WTC11 (cell line): ENCODE measurements at regions of chr2 and their contacts with region 1.

Region 1: DNA sequence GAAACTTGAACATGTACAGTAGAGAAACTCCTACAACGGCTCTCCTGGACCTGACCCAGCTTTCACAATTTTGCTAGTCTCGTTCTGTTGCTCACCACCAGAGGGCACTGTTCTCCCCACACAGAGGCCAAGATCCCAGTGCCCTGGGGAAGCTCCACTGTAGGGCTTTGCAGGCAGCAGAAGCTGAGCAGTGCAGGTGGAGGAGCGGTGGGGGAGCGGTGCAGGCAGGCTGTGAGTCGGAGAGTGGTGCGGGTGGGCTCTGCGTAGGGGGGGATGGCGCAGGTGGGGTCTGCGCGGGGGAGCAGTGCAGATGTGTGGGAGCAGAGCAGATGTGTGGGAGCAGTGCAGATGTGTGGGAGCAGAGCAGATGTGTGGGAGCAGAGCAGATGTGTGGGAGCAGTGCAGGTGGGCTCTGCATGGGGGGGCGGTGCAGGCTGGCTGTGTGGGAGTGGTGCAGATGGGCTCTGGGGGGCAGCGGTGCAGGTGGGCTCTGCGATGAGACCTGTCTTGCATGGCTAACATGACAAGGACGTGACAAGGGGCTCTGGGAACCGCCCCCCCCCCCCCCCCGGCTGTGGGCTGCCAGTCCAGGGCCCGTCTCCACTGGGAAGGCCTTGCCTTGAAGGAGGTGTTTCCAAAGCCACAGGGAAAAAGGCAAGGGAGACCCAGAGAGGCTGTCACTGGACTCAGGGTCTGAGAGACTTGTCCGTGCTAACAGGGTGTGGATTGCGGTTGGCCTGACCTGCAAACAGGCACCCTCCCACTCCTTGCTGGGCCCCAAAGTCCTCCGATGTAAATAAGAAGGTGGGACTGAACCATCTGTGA is 7.3 kb downstream of the CYS1 start:
- DNase-seq: peak; percentile 83
- ATAC-seq: peak; percentile 97
- H3K4me3 Mint-ChIP-seq: no peak overlapping the region
- H3K27ac Mint-ChIP-seq: no peak overlapping the region
- H3K4me1 Mint-ChIP-seq: peaks cover 18% of the 10 kb centered on the region
- H3K27me3 Mint-ChIP-seq: peaks cover 14% of the 10 kb centered on the region
- CTCF ChIP-seq: peak; percentile 89

Region 2: DNA sequence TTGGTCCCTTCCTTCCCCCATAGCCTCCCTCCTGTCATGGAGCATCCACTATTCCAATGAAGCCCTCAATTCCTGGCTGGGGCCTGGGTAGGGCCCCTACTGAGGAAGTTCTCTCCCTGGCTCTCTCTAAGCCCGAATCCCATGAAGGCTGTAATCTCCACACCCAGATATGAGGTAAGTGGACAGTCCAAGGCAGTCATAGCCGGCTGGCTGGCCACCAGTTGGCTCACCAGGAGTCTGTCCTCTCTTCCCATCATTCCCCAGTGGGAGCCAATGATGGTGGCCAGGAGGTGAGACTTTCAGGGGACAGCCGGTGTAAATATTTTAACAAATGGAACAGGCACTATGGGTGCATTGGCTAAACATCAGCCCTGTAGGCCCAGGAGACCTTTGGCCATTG is 236.3 kb before region 1 on chr2:
- CTCF ChIA-PET with region 1: no interaction called
- POLR2A ChIA-PET with region 1: no interaction called
- DNase-seq: no peak
- ATAC-seq: no peak
- H3K4me3 Mint-ChIP-seq: no peak overlapping the region
- H3K27ac Mint-ChIP-seq: no peak overlapping the region
- H3K4me1 Mint-ChIP-seq: peaks cover 6% of the 10 kb centered on the region
- H3K27me3 Mint-ChIP-seq: no peaks in the 10 kb centered on the region
- CTCF ChIP-seq: no peak

Region 3: DNA sequence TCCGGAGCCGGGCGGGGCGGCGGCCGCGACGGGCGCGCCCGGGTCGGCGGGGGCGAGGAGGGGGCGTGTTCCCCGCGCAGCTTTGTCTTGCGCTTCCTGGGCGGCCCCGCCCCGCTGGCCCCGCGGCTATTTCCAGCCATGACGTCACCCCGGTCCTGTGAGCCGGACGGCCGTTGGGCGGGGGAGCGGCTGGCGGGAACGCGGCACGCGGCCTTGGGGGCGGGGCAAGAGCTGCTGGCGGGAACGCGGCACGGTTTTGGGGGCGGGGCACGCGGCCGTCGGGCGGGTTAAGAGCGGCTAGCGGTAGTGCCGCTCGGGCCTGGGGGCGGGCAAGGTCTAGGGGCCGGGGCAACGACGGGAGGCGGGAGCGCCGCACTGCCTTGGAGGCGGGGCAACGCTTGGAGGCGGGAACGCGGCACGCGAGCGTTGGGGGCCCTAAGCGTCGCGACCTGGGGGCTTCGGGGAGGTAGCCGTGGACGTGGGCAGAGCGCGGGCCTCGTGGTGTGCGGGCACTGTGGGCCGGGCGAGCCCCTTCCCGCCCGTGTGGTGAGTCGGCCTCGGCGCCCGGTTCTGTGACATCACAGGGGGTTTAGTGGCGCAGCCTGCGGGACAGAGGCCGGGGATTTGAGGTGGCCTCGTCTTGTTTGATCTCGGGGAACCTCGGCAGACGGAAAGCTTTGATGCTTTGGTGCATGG is 28.8 kb before region 1 on chr2:
- CTCF ChIA-PET with region 1: interaction called, 14 read pairs
- POLR2A ChIA-PET with region 1: no interaction called
- DNase-seq: peak; percentile 95
- ATAC-seq: peak; percentile 63
- H3K4me3 Mint-ChIP-seq: peak overlapping the region; percentile 49
- H3K27ac Mint-ChIP-seq: no peak overlapping the region
- H3K4me1 Mint-ChIP-seq: peaks cover 10% of the 10 kb centered on the region
- H3K27me3 Mint-ChIP-seq: peaks cover 38% of the 10 kb centered on the region
- CTCF ChIP-seq: no peak

Region 4: DNA sequence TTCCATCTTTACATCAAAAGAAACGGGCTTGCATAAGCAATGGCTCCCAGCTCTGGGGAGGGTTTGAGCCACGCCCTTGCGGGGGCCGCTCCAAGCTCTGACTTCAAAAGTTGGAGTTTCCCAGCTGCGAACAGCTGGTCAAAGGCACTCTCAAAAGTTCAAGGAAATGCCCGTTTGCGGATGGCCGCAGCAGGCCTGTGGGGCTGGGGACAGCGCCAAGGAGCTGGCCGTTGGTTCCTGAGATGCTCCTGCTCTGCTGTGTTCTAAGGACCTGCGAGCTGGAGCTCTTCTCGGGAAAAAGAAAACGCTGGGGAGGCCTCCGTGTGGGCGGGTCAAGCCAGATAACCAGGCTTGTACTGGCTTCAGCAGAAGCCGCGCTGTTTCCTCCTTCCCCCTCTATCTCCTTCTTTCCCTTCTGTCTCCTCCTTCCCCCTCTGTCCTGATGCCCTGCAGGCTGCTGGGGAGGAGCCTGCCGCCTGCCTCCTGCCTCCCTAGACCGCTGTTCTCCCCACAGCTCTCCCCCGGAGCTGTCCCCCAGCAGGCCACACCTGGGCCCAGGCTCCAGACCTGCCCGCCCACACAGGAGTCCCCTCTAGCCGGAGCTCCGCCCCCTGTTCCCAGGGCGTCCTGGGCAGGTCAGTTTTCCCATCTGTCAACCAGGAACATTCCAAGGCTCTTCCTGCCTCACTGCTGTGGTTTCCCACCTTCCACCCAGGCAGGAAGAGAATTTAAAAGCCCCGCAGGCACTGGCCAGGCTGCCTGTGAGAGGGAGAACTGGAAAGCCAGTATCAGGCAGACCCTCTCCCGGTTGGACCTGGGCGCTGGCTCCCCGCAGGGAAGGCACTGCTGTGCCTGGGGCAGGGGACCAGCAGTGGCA is 15.4 kb before region 1 on chr2:
- CTCF ChIA-PET with region 1: interaction called, 112 read pairs
- POLR2A ChIA-PET with region 1: interaction called, 4 read pairs
- DNase-seq: peak; percentile 92
- ATAC-seq: peak; percentile 94
- H3K4me3 Mint-ChIP-seq: peak overlapping the region; percentile 85
- H3K27ac Mint-ChIP-seq: peak overlapping the region; percentile 98
- H3K4me1 Mint-ChIP-seq: peaks cover 28% of the 10 kb centered on the region
- H3K27me3 Mint-ChIP-seq: no peaks in the 10 kb centered on the region
- CTCF ChIP-seq: no peak

Region 5: DNA sequence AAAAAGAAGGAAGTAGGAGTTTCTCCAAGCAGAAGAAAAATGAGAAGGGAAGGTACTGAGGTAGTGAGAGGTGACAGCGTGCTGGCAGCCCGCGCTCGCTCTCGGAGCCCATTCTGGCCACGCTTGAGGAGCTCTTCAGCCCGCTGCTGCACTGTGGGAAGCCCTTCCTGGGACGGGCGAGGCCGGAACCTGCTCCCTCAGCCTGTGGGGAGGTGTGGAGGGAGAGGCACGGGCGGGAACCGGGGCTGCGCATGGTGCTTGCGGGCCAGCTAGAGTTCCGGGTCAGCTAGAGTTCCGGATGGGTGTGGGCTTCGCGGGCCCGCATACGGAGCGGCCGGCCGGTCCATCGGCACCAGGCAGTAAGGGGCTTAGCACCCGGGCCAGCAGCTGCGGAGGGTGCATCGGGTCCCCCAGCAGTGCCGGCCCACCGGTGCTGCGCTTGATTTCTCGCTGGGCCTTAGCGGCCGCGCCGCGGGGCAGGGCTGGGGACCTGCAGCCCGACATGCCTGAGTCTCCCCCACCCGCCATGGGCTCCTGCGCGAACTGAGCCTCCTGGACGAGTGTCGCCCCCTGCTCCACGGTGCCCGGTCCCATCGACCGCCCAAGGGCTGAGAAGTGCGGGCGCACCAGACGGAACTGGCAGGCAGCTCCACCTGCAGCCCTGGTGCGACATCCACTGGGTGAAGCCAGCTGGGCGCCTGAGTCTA is 18.5 kb after region 1 on chr2:
- CTCF ChIA-PET with region 1: interaction called, 166 read pairs
- POLR2A ChIA-PET with region 1: no interaction called
- DNase-seq: peak; percentile 19
- ATAC-seq: no peak
- H3K4me3 Mint-ChIP-seq: no peak overlapping the region
- H3K27ac Mint-ChIP-seq: 0 out of 2 replicates have a peak overlapping the region, but pooled peaks have one; percentile 63
- H3K4me1 Mint-ChIP-seq: peaks cover 28% of the 10 kb centered on the region
- H3K27me3 Mint-ChIP-seq: peaks cover 8% of the 10 kb centered on the region
- CTCF ChIP-seq: no peak

Region 6: DNA sequence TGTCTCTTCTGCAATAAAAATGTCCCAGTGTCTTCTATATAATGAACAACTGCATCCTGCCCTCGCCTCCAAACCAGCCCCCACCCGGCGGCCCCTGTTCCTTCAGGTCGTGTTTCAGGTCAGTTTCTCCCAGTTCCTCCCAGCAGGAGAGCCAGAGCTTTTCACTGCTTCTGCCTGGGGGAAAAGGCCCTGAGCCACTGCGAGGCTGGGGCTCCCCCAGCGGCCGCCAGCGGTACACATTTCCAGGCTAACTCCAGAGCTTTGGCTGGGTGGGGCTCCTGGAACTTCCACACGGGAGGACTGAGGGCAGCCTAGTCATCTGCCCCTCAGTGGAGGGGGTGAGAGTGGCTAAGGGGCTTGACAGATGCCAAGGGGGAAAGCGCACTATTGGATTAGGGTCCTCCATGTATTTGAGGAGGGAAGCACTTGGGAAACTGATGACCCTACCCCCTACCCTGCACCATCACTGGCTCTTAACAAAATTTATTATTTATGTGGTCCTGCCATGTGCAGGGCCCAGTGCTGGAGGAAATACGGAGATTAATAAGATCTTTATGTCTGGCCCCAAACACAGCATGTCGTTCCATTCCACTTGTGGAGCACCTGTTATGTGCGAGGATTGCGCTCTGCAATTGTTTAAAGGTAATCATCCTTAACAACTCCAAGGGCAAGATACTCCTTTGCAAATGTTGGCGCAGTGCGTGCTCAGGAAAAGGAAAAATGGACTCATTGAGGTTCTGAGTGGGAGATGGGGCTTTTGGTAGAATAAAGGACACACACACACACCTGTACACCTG is 24.7 kb after region 1 on chr2:
- CTCF ChIA-PET with region 1: interaction called, 166 read pairs
- POLR2A ChIA-PET with region 1: interaction called, 4 read pairs
- DNase-seq: peak; percentile 82
- ATAC-seq: peak; percentile 96
- H3K4me3 Mint-ChIP-seq: no peak overlapping the region
- H3K27ac Mint-ChIP-seq: no peak overlapping the region
- H3K4me1 Mint-ChIP-seq: peaks cover 31% of the 10 kb centered on the region
- H3K27me3 Mint-ChIP-seq: peaks cover under 1% of the 10 kb centered on the region; the same call in 1 of the 2 replicates
- CTCF ChIP-seq: peak; percentile 85; the same call in 1 of the 2 replicates

Region 7: GRCh38 chr2:10122386-10123280 is 49.8 kb after region 1 on chr2 and contains the start of gene RRM2:
- CTCF ChIA-PET with region 1: interaction called, 29 read pairs
- POLR2A ChIA-PET with region 1: interaction called, 3 read pairs
- DNase-seq: peak; percentile 96
- ATAC-seq: peak; percentile 90
- H3K4me3 Mint-ChIP-seq: peak within 1 kb of the TSS; percentile 91
- H3K27ac Mint-ChIP-seq: peak within 1 kb of the TSS; percentile 97
- H3K4me1 Mint-ChIP-seq: peaks cover 36% of the 10 kb centered on the region
- H3K27me3 Mint-ChIP-seq: no peaks in the 10 kb centered on the region; the same call in 1 of the 2 replicates
- CTCF ChIP-seq: no peak
- total RNA-seq, gene RRM2: 119 to 129 TPM (median 126 TPM) in 3 replicates

Region 8: DNA sequence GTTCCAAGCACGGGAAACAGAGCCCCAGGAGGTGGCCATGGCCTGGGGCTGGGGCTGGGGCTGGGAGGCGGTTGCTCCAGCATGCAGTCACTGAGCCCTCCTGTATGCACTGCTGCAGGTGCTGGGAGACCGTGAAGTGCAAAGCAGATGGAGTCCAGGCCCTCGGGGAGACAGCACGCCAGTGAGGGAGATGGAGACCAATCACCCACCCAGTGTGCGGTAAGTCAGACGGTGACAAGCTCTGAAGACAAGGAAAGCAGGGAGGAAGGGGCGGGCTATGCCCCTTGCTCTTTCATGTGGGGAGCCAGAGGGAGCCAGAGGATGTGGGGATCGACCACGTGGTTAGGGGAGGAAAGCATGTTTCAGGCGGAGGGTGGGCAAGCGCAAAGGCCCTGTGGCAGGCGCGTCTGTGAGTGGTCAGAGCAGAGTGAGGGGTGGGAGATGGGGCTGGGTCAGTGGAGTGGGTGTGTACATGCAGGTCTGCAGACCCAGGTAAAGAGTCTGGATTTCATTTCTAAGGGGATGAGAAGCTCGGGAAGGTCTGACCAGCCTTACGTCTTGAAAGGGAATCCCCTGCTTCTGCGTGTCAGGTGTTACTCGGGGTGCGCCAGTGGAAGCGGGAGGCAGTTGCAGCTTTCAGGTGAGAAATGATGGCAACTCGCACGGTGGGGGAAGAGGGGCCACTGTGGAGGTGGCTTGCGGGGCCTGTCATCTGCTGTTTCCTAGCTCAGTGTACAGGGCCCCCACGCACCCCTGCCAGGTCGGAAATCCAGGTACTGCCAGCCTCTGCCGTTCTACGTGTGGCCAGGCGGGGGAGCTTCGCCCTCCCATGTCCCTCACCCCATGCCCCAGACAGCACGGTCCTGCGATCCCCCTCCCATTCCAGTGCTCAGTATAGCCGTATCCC is 69.1 kb after region 1 on chr2:
- CTCF ChIA-PET with region 1: interaction called, 13 read pairs
- POLR2A ChIA-PET with region 1: no interaction called
- DNase-seq: peak; percentile 68
- ATAC-seq: peak; percentile 89
- H3K4me3 Mint-ChIP-seq: no peak overlapping the region
- H3K27ac Mint-ChIP-seq: no peak overlapping the region; the same call in 1 of the 2 replicates
- H3K4me1 Mint-ChIP-seq: peaks cover 5% of the 10 kb centered on the region; the same call in 1 of the 2 replicates
- H3K27me3 Mint-ChIP-seq: no peaks in the 10 kb centered on the region
- CTCF ChIP-seq: peak; percentile 60